ENCODE measurements at regions of chr4 and their contacts with region 1.

Region 1: GRCh38 chr4:77126809-77127208 is 30.2 kb upstream of the CCNG2 start:
- DNase-seq: peak; percentile 87
- H3K4me3 ChIP-seq: peak overlapping the region; percentile 15
- H3K27ac ChIP-seq: peak overlapping the region; percentile 74
- H3K4me1 ChIP-seq: peaks cover 50% of the 10 kb centered on the region
- CTCF ChIP-seq: no peak

Region 2: GRCh38 chr4:77110730-77111129 is 16.1 kb before region 1 on chr4:
- CTCF ChIA-PET with region 1: no interaction called
- POLR2A ChIA-PET with region 1: interaction called, 11 read pairs
- intact Hi-C with region 1: no loop called
- DNase-seq: no peak
- H3K4me3 ChIP-seq: no peak overlapping the region
- H3K27ac ChIP-seq: no peak overlapping the region
- H3K4me1 ChIP-seq: no peaks in the 10 kb centered on the region
- CTCF ChIP-seq: no peak

Region 3: GRCh38 chr4:77669946-77670590 is 543.3 kb after region 1 on chr4:
- CTCF ChIA-PET with region 1: no interaction called
- POLR2A ChIA-PET with region 1: no interaction called
- intact Hi-C with region 1: no loop called
- DNase-seq: no peak
- H3K4me3 ChIP-seq: no peak overlapping the region
- H3K27ac ChIP-seq: no peak overlapping the region
- H3K4me1 ChIP-seq: no peaks in the 10 kb centered on the region
- CTCF ChIP-seq: no peak